AG04449 (cell line): ENCODE measurements at regions of chr10 and their contacts with region 1.

Region 1: GRCh38 chr10:27518261-27518660 is 14.2 kb downstream of the RAB18 start:
- DNase-seq: no peak
- H3K4me3 ChIP-seq: no peak overlapping the region
- CTCF ChIP-seq: no peak

Region 2: GRCh38 chr10:27504007-27504807 is 14.1 kb before region 1 on chr10 and contains the start of gene RAB18:
- CTCF ChIA-PET with region 1: interaction called, 5 read pairs
- POLR2A ChIA-PET with region 1: interaction called, 10 read pairs
- DNase-seq: peak; percentile 90
- H3K4me3 ChIP-seq: peak within 1 kb of the TSS; percentile 94
- CTCF ChIP-seq: peak; percentile 20

Region 3: DNA sequence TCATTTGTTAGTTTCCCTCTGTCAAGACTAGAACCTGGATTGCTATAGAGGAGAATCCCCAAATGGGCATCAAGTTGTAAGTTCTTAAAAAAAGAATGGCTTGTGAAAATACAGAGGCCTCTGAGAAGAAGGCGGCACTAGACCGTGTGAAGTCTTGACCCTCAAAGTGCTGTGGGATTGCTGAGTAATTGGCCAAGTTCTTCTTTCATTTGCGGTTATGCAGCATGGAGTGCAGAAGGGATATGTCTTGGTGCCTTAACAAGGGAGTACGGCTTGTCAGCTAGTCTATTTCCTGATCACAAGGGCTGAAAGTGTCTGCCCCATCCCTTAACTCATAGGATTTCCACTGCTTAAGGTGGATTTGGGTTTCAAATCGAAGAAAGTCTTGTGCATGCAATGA is 146.2 kb after region 1 on chr10:
- CTCF ChIA-PET with region 1: no interaction called
- POLR2A ChIA-PET with region 1: no interaction called
- DNase-seq: no peak
- H3K4me3 ChIP-seq: no peak overlapping the region
- CTCF ChIP-seq: no peak